ENCODE measurements at regions of chr1 and their contacts with region 1.

Region 1: GRCh38 chr1:215031392-215031791 is 51.1 kb upstream of the KCNK2 start:
- DNase-seq: no peak
- ATAC-seq: no peak
- H3K4me3 ChIP-seq: no peak overlapping the region
- H3K27ac ChIP-seq: no peak overlapping the region
- H3K4me1 ChIP-seq: no peaks in the 10 kb centered on the region
- H3K27me3 ChIP-seq: peaks cover 7% of the 10 kb centered on the region; the same call in 1 of the 2 replicates
- CTCF ChIP-seq: no peak

Region 2: GRCh38 chr1:215018555-215018954 is 12.8 kb before region 1 on chr1:
- CTCF ChIA-PET with region 1: no interaction called
- POLR2A ChIA-PET with region 1: no interaction called
- intact Hi-C with region 1: loop called (anchors 2 kb)
- DNase-seq: no peak
- ATAC-seq: no peak
- H3K4me3 ChIP-seq: no peak overlapping the region
- H3K27ac ChIP-seq: no peak overlapping the region
- H3K4me1 ChIP-seq: no peaks in the 10 kb centered on the region
- H3K27me3 ChIP-seq: no peaks in the 10 kb centered on the region
- CTCF ChIP-seq: no peak